ENCODE measurements at regions of chr12 and their contacts with region 1.

Region 1: GRCh38 chr12:27305673-27306456 is 26.8 kb upstream of the BMAL2 start:
- DNase-seq: peak in 6 of 9 donors; percentile 20 to 48 (median 34)
- ATAC-seq: no peak
- H3K4me3 ChIP-seq: no peak overlapping the region
- H3K4me3 Mint-ChIP-seq: no peak overlapping the region
- H3K27ac ChIP-seq: no peak overlapping the region
- H3K27ac Mint-ChIP-seq: peak overlapping the region in 6 of 9 donors; percentile 1 to 67 (median 16)
- H3K4me1 ChIP-seq: no peaks in the 10 kb centered on the region
- H3K4me1 Mint-ChIP-seq: peaks cover 0 to 15% (median 0%) of the 10 kb centered on the region in 7 donors
- H3K27me3 ChIP-seq: no peaks in the 10 kb centered on the region
- H3K27me3 Mint-ChIP-seq: no peaks in the 10 kb centered on the region

Region 2: GRCh38 chr12:26884765-26885576 is 420.9 kb before region 1 on chr12:
- CTCF ChIA-PET with region 1: interaction called, 5 read pairs
- POLR2A ChIA-PET with region 1: no interaction called
- intact Hi-C with region 1: loop called in 1 of 2 experiments (anchors 1 kb)
- DNase-seq: peak; percentile 62 to 88 (median 81)
- ATAC-seq: peak; percentile 99
- H3K4me3 ChIP-seq: peak overlapping the region; percentile 46
- H3K4me3 Mint-ChIP-seq: peak overlapping the region; percentile 46 to 80 (median 64)
- H3K27ac ChIP-seq: no peak overlapping the region
- H3K27ac Mint-ChIP-seq: no peak overlapping the region
- H3K4me1 ChIP-seq: peaks cover 0 to 3% of the 10 kb centered on the region in 2 donors
- H3K4me1 Mint-ChIP-seq: peaks cover 4 to 13% (median 7%) of the 10 kb centered on the region in 7 donors
- H3K27me3 ChIP-seq: no peaks in the 10 kb centered on the region
- H3K27me3 Mint-ChIP-seq: peaks cover 3 to 26% (median 6%) of the 10 kb centered on the region in 5 donors

Region 3: GRCh38 chr12:27123642-27124041 is 182.2 kb before region 1 on chr12:
- CTCF ChIA-PET with region 1: no interaction called
- POLR2A ChIA-PET with region 1: no interaction called
- intact Hi-C with region 1: loop called in 1 of 2 experiments (anchors 1 kb)
- DNase-seq: no peak
- ATAC-seq: no peak
- H3K4me3 ChIP-seq: no peak overlapping the region
- H3K4me3 Mint-ChIP-seq: no peak overlapping the region
- H3K27ac ChIP-seq: no peak overlapping the region
- H3K27ac Mint-ChIP-seq: no peak overlapping the region
- H3K4me1 ChIP-seq: no peaks in the 10 kb centered on the region
- H3K4me1 Mint-ChIP-seq: peaks cover 0 to 2% (median 0%) of the 10 kb centered on the region in 7 donors
- H3K27me3 ChIP-seq: no peaks in the 10 kb centered on the region
- H3K27me3 Mint-ChIP-seq: peaks cover 0 to 5% (median 0%) of the 10 kb centered on the region in 5 donors

Region 4: GRCh38 chr12:27243804-27244683 is 61.8 kb before region 1 on chr12 and contains the start of gene STK38L:
- CTCF ChIA-PET with region 1: no interaction called
- POLR2A ChIA-PET with region 1: no interaction called
- intact Hi-C with region 1: loop called (anchors 2 kb)
- DNase-seq: peak; percentile 94 to 98 (median 96)
- ATAC-seq: peak; percentile 98
- H3K4me3 ChIP-seq: peak within 1 kb of the TSS; percentile 84
- H3K4me3 Mint-ChIP-seq: peak within 1 kb of the TSS; percentile 97 to 100 (median 99)
- H3K27ac ChIP-seq: peak within 1 kb of the TSS; percentile 82
- H3K27ac Mint-ChIP-seq: peak within 1 kb of the TSS; percentile 92 to 99 (median 97)
- H3K4me1 ChIP-seq: peaks cover 12 to 13% of the 10 kb centered on the region in 2 donors
- H3K4me1 Mint-ChIP-seq: peaks cover 17 to 62% (median 51%) of the 10 kb centered on the region in 7 donors
- H3K27me3 ChIP-seq: no peaks in the 10 kb centered on the region
- H3K27me3 Mint-ChIP-seq: no peaks in the 10 kb centered on the region
- total RNA-seq, gene STK38L: 16.2 to 22.8 (median 21.2) TPM